Right cardiac atrium (tissue), 5 donors: ENCODE measurements at regions of chr21 and their contacts with region 1.

Region 1: GRCh38 chr21:43718872-43719747 is at the start of gene PDXK:
- DNase-seq: peak; percentile 87 to 96 (median 95)
- ATAC-seq: peak; percentile 90 to 96
- H3K4me3 ChIP-seq: peak within 1 kb of the TSS; percentile 55
- H3K27ac ChIP-seq: peak within 1 kb of the TSS; percentile 27
- H3K4me1 ChIP-seq: peaks cover 14% of the 10 kb centered on the region
- H3K27me3 ChIP-seq: no peaks in the 10 kb centered on the region
- total RNA-seq, gene PDXK: 74.9 to 102 (median 83.5) TPM

Region 2: GRCh38 chr21:43667191-43667904 is 51.8 kb before region 1 on chr21:
- intact Hi-C with region 1: loop called in 1 of 4 experiments (anchors 10 kb)
- DNase-seq: no peak
- ATAC-seq: no peak
- H3K4me3 ChIP-seq: no peak overlapping the region
- H3K27ac ChIP-seq: no peak overlapping the region
- H3K4me1 ChIP-seq: no peaks in the 10 kb centered on the region
- H3K27me3 ChIP-seq: no peaks in the 10 kb centered on the region

Region 3: GRCh38 chr21:43687566-43688286 is 31.4 kb before region 1 on chr21:
- intact Hi-C with region 1: loop called in 1 of 4 experiments (anchors 5 kb)
- DNase-seq: no peak
- ATAC-seq: peak in 1 of 2 donors; percentile 12
- H3K4me3 ChIP-seq: no peak overlapping the region
- H3K27ac ChIP-seq: no peak overlapping the region
- H3K4me1 ChIP-seq: no peaks in the 10 kb centered on the region
- H3K27me3 ChIP-seq: no peaks in the 10 kb centered on the region

Region 4: GRCh38 chr21:44927587-44928461 is 1208.7 kb after region 1 on chr21:
- intact Hi-C with region 1: no loop called
- DNase-seq: peak; percentile 7 to 82 (median 80)
- ATAC-seq: peak; percentile 20 to 26
- H3K4me3 ChIP-seq: no peak overlapping the region
- H3K27ac ChIP-seq: no peak overlapping the region
- H3K4me1 ChIP-seq: no peaks in the 10 kb centered on the region
- H3K27me3 ChIP-seq: no peaks in the 10 kb centered on the region